ENCODE measurements at regions of chr4 and their contacts with region 1.

Region 1: GRCh38 chr4:151442002-151442401 is 33.0 kb downstream of the FHIP1A start:
- DNase-seq: no peak
- H3K4me3 ChIP-seq: no peak overlapping the region
- H3K27ac ChIP-seq: no peak overlapping the region
- H3K4me1 ChIP-seq: peaks cover 3 to 10% (median 8%) of the 10 kb centered on the region in 4 experiments; a peak in 6 of 7 replicates
- H3K27me3 ChIP-seq: no peaks in the 10 kb centered on the region
- CTCF ChIP-seq: no peak
- EP300 ChIP-seq: no peak
- POLR2A ChIP-seq: no peak
- RAD21 ChIP-seq: no peak

Region 2: GRCh38 chr4:151202851-151203455 is 239.0 kb before region 1 on chr4:
- CTCF ChIA-PET with region 1: no interaction called
- POLR2A ChIA-PET with region 1: no interaction called
- DNase-seq: no peak
- H3K4me3 ChIP-seq: no peak overlapping the region
- H3K27ac ChIP-seq: no peak overlapping the region
- H3K4me1 ChIP-seq: peaks cover 0 to 2% (median 1%) of the 10 kb centered on the region in 4 experiments; a peak in 2 of 7 replicates
- H3K27me3 ChIP-seq: no peaks in the 10 kb centered on the region
- CTCF ChIP-seq: no peak
- EP300 ChIP-seq: no peak
- POLR2A ChIP-seq: no peak
- RAD21 ChIP-seq: no peak

Region 3: DNA sequence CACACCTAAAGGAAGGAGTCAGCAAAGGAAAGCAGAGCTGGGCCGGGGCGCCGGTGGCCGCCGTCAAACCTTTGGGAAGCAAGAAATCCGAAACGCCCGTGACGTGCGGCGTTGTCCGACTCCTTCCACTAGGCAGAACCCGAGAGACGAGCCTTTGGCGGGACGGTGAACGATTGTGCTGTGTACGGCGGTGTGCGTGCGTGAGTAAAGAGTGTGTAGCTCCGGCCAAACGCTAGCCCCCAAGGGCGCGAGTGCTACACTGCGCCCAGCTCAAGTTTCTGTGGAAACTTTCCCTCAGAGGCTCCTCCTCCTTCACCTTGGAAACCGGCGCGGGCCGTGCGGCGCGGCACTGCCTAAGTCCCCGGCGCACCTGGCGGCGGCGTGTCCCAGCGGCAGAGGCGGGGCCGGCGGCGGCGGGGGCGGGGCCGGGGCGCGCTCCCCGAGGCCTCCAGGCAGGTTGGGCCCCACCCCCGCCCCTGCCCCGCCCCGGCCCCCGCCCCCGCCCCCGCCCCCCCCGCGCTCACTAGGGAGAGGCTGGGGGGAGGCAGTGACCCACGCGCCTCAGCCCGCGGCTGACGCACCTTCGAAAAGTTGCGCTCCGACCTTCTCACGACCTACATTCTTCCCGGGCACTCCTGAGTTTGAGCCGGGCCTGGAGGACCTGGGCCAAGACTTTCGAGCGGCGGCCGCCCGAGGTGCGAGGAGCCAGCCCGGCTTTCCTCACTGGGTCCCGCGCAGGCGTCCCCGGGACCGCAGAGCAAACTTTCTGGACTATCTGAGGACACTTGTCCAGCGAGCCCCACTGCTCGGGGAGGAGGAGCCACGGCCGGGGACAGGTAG is 33.2 kb before region 1 on chr4 and contains the start of gene FHIP1A:
- CTCF ChIA-PET with region 1: no interaction called
- POLR2A ChIA-PET with region 1: interaction called, 15 read pairs
- DNase-seq: peak; percentile 84 to 95
- H3K4me3 ChIP-seq: peak within 1 kb of the TSS; percentile 71 to 91 (median 74)
- H3K27ac ChIP-seq: peak within 1 kb of the TSS; percentile 92
- H3K4me1 ChIP-seq: peaks cover 3 to 15% (median 6%) of the 10 kb centered on the region in 4 experiments; a peak in 6 of 7 replicates
- H3K27me3 ChIP-seq: no peaks in the 10 kb centered on the region
- CTCF ChIP-seq: peak in 2 of 3 experiments; percentile 1 to 2; a peak in 1 of 4 replicates
- EP300 ChIP-seq: no peak
- POLR2A ChIP-seq: peak; percentile 61 to 96
- RAD21 ChIP-seq: peak in 1 of 2 experiments; percentile 17; a peak in 1 of 4 replicates
- total RNA-seq, gene FHIP1A: 75.2 and 76.3 TPM in 2 replicates

Region 4: GRCh38 chr4:151420250-151420807 is 21.7 kb before region 1 on chr4:
- CTCF ChIA-PET with region 1: no interaction called
- POLR2A ChIA-PET with region 1: no interaction called
- DNase-seq: no peak
- H3K4me3 ChIP-seq: no peak overlapping the region
- H3K27ac ChIP-seq: no peak overlapping the region
- H3K4me1 ChIP-seq: peaks cover 0 to 3% (median 2%) of the 10 kb centered on the region in 4 experiments; a peak in 4 of 7 replicates
- H3K27me3 ChIP-seq: no peaks in the 10 kb centered on the region
- CTCF ChIP-seq: no peak
- EP300 ChIP-seq: no peak
- POLR2A ChIP-seq: no peak
- RAD21 ChIP-seq: no peak

Region 5: GRCh38 chr4:151744614-151745013 is 302.6 kb after region 1 on chr4:
- CTCF ChIA-PET with region 1: no interaction called
- POLR2A ChIA-PET with region 1: no interaction called
- DNase-seq: no peak
- H3K4me3 ChIP-seq: no peak overlapping the region
- H3K27ac ChIP-seq: no peak overlapping the region
- H3K4me1 ChIP-seq: peaks cover 0 to 6% (median 3%) of the 10 kb centered on the region in 4 experiments; a peak in 3 of 7 replicates
- H3K27me3 ChIP-seq: no peaks in the 10 kb centered on the region
- CTCF ChIP-seq: no peak
- EP300 ChIP-seq: no peak
- POLR2A ChIP-seq: no peak
- RAD21 ChIP-seq: no peak

Measured in H1 (cell line).